ENCODE measurements at regions of chr4 and their contacts with region 1.

Region 1: GRCh38 chr4:62093735-62094134 is 893.6 kb downstream of the ADGRL3 start:
- DNase-seq: no peak
- ATAC-seq: no peak
- H3K4me3 ChIP-seq: no peak overlapping the region
- H3K4me3 Mint-ChIP-seq: no peak overlapping the region
- H3K27ac ChIP-seq: no peak overlapping the region
- H3K27ac Mint-ChIP-seq: no peak overlapping the region
- H3K4me1 ChIP-seq: no peaks in the 10 kb centered on the region
- H3K4me1 Mint-ChIP-seq: no peaks in the 10 kb centered on the region
- H3K27me3 ChIP-seq: no peaks in the 10 kb centered on the region
- H3K27me3 Mint-ChIP-seq: no peaks in the 10 kb centered on the region

Region 2: DNA sequence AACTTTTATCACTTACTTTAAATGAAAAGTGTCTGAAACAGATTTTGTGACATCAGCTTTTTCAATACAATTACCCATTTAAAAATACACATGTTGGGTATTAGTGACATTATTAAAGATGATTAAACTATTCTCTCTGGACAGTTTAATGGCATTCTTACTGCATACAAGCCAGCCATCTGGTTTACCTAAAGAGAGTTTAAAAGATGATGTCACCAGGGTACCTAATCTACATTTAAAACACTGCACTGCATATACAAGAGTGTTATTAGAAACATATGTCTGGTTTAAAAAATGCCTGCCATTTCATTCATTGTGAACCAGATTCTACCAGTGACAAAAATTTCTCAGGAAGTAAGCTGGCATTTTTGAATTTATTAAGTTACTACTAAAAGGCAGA is 25.5 kb after region 1 on chr4:
- CTCF ChIA-PET with region 1: interaction called in 1 of 2 experiments, 3 read pairs
- POLR2A ChIA-PET with region 1: interaction called in 1 of 2 experiments, 10 read pairs
- DNase-seq: no peak
- ATAC-seq: no peak
- H3K4me3 ChIP-seq: no peak overlapping the region
- H3K4me3 Mint-ChIP-seq: no peak overlapping the region
- H3K27ac ChIP-seq: no peak overlapping the region
- H3K27ac Mint-ChIP-seq: no peak overlapping the region
- H3K4me1 ChIP-seq: no peaks in the 10 kb centered on the region
- H3K4me1 Mint-ChIP-seq: no peaks in the 10 kb centered on the region
- H3K27me3 ChIP-seq: no peaks in the 10 kb centered on the region
- H3K27me3 Mint-ChIP-seq: no peaks in the 10 kb centered on the region

Measured in T-cell (primary cell).